CD4-positive, alpha-beta T cell (primary cell): ENCODE measurements at regions of chr4 and their contacts with region 1.

Region 1: GRCh38 chr4:42568610-42569207 is 88.2 kb downstream of the ATP8A1 start:
- DNase-seq: peak; percentile 30 to 83 (median 54)
- ATAC-seq: peak; percentile 89
- H3K4me3 ChIP-seq: no peak overlapping the region
- H3K4me3 Mint-ChIP-seq: no peak overlapping the region
- H3K27ac ChIP-seq: no peak overlapping the region
- H3K27ac Mint-ChIP-seq: no peak overlapping the region
- H3K4me1 ChIP-seq: no peaks in the 10 kb centered on the region
- H3K4me1 Mint-ChIP-seq: no peaks in the 10 kb centered on the region
- H3K27me3 ChIP-seq: no peaks in the 10 kb centered on the region
- H3K27me3 Mint-ChIP-seq: no peaks in the 10 kb centered on the region
- CTCF ChIP-seq: peak; percentile 93

Region 2: DNA sequence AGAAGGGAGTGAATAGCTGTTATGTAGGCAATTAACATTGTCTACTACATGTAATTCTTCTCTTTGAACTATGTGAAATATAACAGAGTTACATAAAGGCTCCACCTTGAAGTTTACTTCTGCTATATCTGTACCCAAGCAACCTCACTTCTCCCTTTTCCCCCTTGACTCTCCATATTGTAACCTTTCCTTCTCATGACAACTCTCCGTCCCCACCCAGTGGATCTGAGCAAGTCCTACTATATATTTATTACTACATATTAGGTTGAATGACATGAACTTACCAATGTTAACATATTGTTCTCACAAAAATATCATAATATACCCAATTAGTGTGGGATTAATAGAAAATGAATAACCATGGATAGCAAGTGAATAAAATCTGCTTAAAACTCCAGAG is 181.4 kb after region 1 on chr4:
- CTCF ChIA-PET with region 1: interaction called, 5 read pairs
- POLR2A ChIA-PET with region 1: interaction called, 3 read pairs
- intact Hi-C with region 1: loop called (anchors 1 to 2 kb)
- DNase-seq: peak in 8 of 14 experiments; percentile 3 to 68 (median 32)
- ATAC-seq: peak; percentile 62
- H3K4me3 ChIP-seq: no peak overlapping the region
- H3K4me3 Mint-ChIP-seq: no peak overlapping the region
- H3K27ac ChIP-seq: no peak overlapping the region
- H3K27ac Mint-ChIP-seq: no peak overlapping the region
- H3K4me1 ChIP-seq: no peaks in the 10 kb centered on the region
- H3K4me1 Mint-ChIP-seq: no peaks in the 10 kb centered on the region
- H3K27me3 ChIP-seq: no peaks in the 10 kb centered on the region
- H3K27me3 Mint-ChIP-seq: no peaks in the 10 kb centered on the region
- CTCF ChIP-seq: peak; percentile 47

Region 3: DNA sequence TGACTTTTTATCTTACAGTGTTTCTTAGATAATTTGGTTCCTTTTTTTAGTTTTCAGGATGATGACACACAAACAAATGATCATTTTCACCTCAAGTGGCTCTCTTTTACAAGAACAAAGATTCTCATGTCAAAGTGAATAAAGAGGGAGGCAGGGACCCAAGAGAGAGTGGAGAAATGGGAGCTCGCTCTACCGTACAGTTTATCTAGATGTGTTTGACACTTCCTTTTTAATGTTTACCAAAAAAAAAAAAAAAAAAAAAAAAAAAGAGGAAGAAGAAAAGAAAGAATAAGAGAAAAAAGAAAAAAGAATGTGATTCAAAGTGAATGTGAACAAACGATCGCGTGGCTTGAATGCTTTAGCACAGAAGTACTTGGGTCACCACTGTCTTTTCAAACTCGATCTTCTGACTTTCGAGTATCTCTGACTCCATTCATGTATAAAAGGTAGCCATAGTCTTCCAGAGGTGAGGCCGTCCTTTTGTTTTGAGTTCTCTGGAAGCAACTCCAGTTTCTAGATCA is 248.2 kb after region 1 on chr4:
- CTCF ChIA-PET with region 1: interaction called, 7 read pairs
- POLR2A ChIA-PET with region 1: no interaction called
- intact Hi-C with region 1: loop called in 1 of 2 experiments (anchors 1 kb)
- DNase-seq: no peak
- ATAC-seq: no peak
- H3K4me3 ChIP-seq: no peak overlapping the region
- H3K4me3 Mint-ChIP-seq: no peak overlapping the region
- H3K27ac ChIP-seq: no peak overlapping the region
- H3K27ac Mint-ChIP-seq: no peak overlapping the region
- H3K4me1 ChIP-seq: no peaks in the 10 kb centered on the region
- H3K4me1 Mint-ChIP-seq: no peaks in the 10 kb centered on the region
- H3K27me3 ChIP-seq: peaks cover 0 to under 1% of the 10 kb centered on the region in 2 experiments
- H3K27me3 Mint-ChIP-seq: peaks cover 3% of the 10 kb centered on the region
- CTCF ChIP-seq: no peak

Region 4: GRCh38 chr4:42865572-42866189 is 297.0 kb after region 1 on chr4:
- CTCF ChIA-PET with region 1: interaction called, 6 read pairs
- POLR2A ChIA-PET with region 1: no interaction called
- intact Hi-C with region 1: loop called (anchors 1 kb)
- DNase-seq: peak in 13 of 14 experiments; percentile 0 to 69 (median 17)
- ATAC-seq: peak; percentile 37
- H3K4me3 ChIP-seq: no peak overlapping the region
- H3K4me3 Mint-ChIP-seq: no peak overlapping the region
- H3K27ac ChIP-seq: no peak overlapping the region
- H3K27ac Mint-ChIP-seq: no peak overlapping the region
- H3K4me1 ChIP-seq: peaks cover 2% of the 10 kb centered on the region
- H3K4me1 Mint-ChIP-seq: no peaks in the 10 kb centered on the region
- H3K27me3 ChIP-seq: peaks cover 0 to 6% of the 10 kb centered on the region in 2 experiments
- H3K27me3 Mint-ChIP-seq: peaks cover 44% of the 10 kb centered on the region
- CTCF ChIP-seq: peak; percentile 75

Region 5: DNA sequence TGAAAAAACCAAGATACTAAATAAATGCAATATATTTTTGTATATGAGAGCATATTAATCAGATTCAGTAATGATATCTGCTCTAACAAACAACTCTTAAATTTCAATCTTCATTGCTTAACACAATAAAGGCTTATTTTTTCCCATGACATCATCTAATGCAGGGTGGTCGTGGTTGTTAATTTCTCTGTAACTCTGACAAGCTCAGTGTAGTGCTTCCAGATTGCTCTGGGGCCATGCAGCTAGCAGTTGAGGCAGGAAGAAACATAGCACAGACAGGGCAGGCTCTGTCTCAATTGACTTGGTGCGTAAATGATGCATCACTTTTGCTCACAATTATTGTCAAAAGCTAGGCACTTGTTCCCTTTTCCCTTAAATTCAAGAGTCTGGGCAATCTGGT is 322.9 kb after region 1 on chr4:
- CTCF ChIA-PET with region 1: no interaction called
- POLR2A ChIA-PET with region 1: no interaction called
- intact Hi-C with region 1: no loop called
- DNase-seq: no peak
- ATAC-seq: no peak
- H3K4me3 ChIP-seq: no peak overlapping the region
- H3K4me3 Mint-ChIP-seq: no peak overlapping the region
- H3K27ac ChIP-seq: no peak overlapping the region
- H3K27ac Mint-ChIP-seq: no peak overlapping the region
- H3K4me1 ChIP-seq: no peaks in the 10 kb centered on the region
- H3K4me1 Mint-ChIP-seq: no peaks in the 10 kb centered on the region
- H3K27me3 ChIP-seq: peaks cover 5% of the 10 kb centered on the region in 2 experiments
- H3K27me3 Mint-ChIP-seq: peaks cover 47% of the 10 kb centered on the region
- CTCF ChIP-seq: no peak

Region 6: GRCh38 chr4:43163101-43163792 is 594.5 kb after region 1 on chr4:
- CTCF ChIA-PET with region 1: no interaction called
- POLR2A ChIA-PET with region 1: no interaction called
- intact Hi-C with region 1: loop called in 1 of 2 experiments (anchors 10 kb)
- DNase-seq: no peak
- ATAC-seq: no peak
- H3K4me3 ChIP-seq: no peak overlapping the region
- H3K4me3 Mint-ChIP-seq: no peak overlapping the region
- H3K27ac ChIP-seq: no peak overlapping the region
- H3K27ac Mint-ChIP-seq: no peak overlapping the region
- H3K4me1 ChIP-seq: no peaks in the 10 kb centered on the region
- H3K4me1 Mint-ChIP-seq: no peaks in the 10 kb centered on the region
- H3K27me3 ChIP-seq: no peaks in the 10 kb centered on the region
- H3K27me3 Mint-ChIP-seq: no peaks in the 10 kb centered on the region
- CTCF ChIP-seq: no peak